K562 (cell line): ENCODE measurements at regions of chr3 and their contacts with region 1.

Region 1: DNA sequence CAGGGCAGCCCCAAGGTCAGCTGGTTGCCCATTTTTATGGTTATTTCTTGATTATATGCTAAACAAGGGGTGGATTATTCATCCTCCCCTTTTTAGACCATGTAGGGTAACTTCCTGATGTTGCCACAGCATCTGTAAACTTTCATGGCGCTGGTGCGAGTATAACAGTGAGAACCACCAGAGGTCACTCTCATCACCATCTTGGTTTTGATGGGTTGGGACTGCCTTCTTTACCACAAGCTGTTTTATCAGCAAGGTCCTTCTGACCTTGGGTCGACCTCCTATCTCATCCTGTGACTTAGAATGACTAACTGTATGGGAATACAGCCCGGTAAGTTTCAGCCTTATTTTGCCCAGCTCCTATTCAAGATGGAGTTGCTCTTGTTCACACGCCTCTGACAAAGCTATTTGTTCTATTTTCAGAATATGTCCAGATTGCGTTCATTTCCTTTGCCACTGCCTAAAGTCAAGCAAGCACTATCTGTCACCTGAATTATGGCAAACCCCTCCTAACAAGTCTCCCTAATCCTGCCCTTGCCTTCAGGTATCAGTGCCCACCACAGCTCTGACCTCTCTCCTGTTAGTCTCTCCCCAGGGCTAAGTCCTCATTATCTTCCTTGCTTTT is 308.4 kb downstream of the ROBO2 start:
- DNase-seq: peak in 3 of 4 experiments; percentile 3 to 67 (median 8)
- ATAC-seq: peak; percentile 58
- H3K4me3 ChIP-seq: no peak overlapping the region
- H3K27ac ChIP-seq: no peak overlapping the region
- H3K4me1 ChIP-seq: no peaks in the 10 kb centered on the region; a peak in 1 of 5 replicates
- H3K27me3 ChIP-seq: no peaks in the 10 kb centered on the region
- CTCF ChIP-seq: peak; percentile 21 to 50 (median 38); a peak in 4 of 6 replicates
- EP300 ChIP-seq: no peak
- POLR2A ChIP-seq: no peak
- RAD21 ChIP-seq: peak in 1 of 2 experiments; percentile 20; a peak in 2 of 4 replicates

Region 2: GRCh38 chr3:77271711-77272110 is 76.6 kb before region 1 on chr3:
- CTCF ChIA-PET with region 1: no interaction called
- POLR2A ChIA-PET with region 1: no interaction called
- in situ Hi-C with region 1: no loop called
- intact Hi-C with region 1: no loop called
- DNase-seq: no peak
- ATAC-seq: no peak
- H3K4me3 ChIP-seq: no peak overlapping the region
- H3K27ac ChIP-seq: no peak overlapping the region
- H3K4me1 ChIP-seq: no peaks in the 10 kb centered on the region; a peak in 1 of 5 replicates
- H3K27me3 ChIP-seq: no peaks in the 10 kb centered on the region
- CTCF ChIP-seq: no peak
- EP300 ChIP-seq: no peak
- POLR2A ChIP-seq: no peak
- RAD21 ChIP-seq: no peak

Region 3: GRCh38 chr3:77338195-77338594 is 10.1 kb before region 1 on chr3:
- CTCF ChIA-PET with region 1: no interaction called
- POLR2A ChIA-PET with region 1: no interaction called
- in situ Hi-C with region 1: no loop called
- intact Hi-C with region 1: no loop called
- DNase-seq: no peak
- ATAC-seq: no peak
- H3K4me3 ChIP-seq: no peak overlapping the region
- H3K27ac ChIP-seq: no peak overlapping the region
- H3K4me1 ChIP-seq: no peaks in the 10 kb centered on the region
- H3K27me3 ChIP-seq: no peaks in the 10 kb centered on the region
- CTCF ChIP-seq: no peak
- EP300 ChIP-seq: no peak
- POLR2A ChIP-seq: no peak
- RAD21 ChIP-seq: no peak

Region 4: GRCh38 chr3:78645628-78646310 is 1297.4 kb after region 1 on chr3:
- CTCF ChIA-PET with region 1: no interaction called
- POLR2A ChIA-PET with region 1: no interaction called
- in situ Hi-C with region 1: no loop called
- intact Hi-C with region 1: loop called (anchors 10 kb)
- DNase-seq: peak; percentile 17 to 54 (median 34)
- ATAC-seq: no peak
- H3K4me3 ChIP-seq: no peak overlapping the region
- H3K27ac ChIP-seq: no peak overlapping the region
- H3K4me1 ChIP-seq: no peaks in the 10 kb centered on the region
- H3K27me3 ChIP-seq: no peaks in the 10 kb centered on the region
- CTCF ChIP-seq: peak in 2 of 3 experiments; percentile 55 to 64; a peak in 4 of 6 replicates
- EP300 ChIP-seq: no peak
- POLR2A ChIP-seq: no peak
- RAD21 ChIP-seq: peak; percentile 61 to 77